ENCODE measurements at regions of chr11 and their contacts with region 1.

Region 1: DNA sequence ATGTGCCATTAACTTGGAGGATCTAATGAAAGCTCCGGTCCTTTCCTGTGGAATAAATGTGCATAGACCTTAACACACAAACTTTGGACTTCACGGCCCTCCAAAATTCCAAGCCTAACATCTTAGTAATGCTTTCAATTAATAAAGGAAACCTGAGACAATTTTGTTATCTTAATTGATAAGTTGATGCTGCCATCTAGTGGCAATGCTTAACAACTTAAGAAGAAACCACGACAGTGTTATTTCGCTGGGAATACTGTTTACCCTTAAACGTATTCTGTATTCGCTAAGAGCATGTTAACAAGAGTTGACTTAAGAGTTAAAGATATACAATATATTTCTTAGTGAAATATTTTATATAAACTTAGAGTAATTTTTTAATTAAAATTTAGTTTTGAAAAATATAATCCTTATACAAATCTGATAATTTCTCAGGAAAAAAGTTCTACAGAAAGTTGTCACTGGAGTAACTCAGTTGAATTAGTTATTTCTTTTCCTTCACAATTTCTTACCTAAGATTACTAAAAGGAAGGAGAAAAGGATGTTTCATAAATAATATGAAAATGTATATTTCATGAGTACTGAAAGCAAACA is 35.0 kb upstream of the OR9G4 start:
- DNase-seq: no peak
- H3K4me3 Mint-ChIP-seq: no peak overlapping the region
- H3K27ac Mint-ChIP-seq: no peak overlapping the region
- H3K4me1 Mint-ChIP-seq: no peaks in the 10 kb centered on the region
- H3K27me3 Mint-ChIP-seq: no peaks in the 10 kb centered on the region

Region 2: GRCh38 chr11:55714982-55715888 is 1068.3 kb before region 1 on chr11:
- CTCF ChIA-PET with region 1: no interaction called
- intact Hi-C with region 1: loop called (anchors 5 kb)
- DNase-seq: peak; percentile 13
- H3K4me3 Mint-ChIP-seq: no peak overlapping the region
- H3K27ac Mint-ChIP-seq: no peak overlapping the region
- H3K4me1 Mint-ChIP-seq: no peaks in the 10 kb centered on the region
- H3K27me3 Mint-ChIP-seq: no peaks in the 10 kb centered on the region

Region 3: GRCh38 chr11:55942785-55943392 is 840.7 kb before region 1 on chr11:
- CTCF ChIA-PET with region 1: no interaction called
- intact Hi-C with region 1: loop called (anchors 1 kb)
- DNase-seq: no peak
- H3K4me3 Mint-ChIP-seq: no peak overlapping the region
- H3K27ac Mint-ChIP-seq: no peak overlapping the region
- H3K4me1 Mint-ChIP-seq: no peaks in the 10 kb centered on the region
- H3K27me3 Mint-ChIP-seq: no peaks in the 10 kb centered on the region

Region 4: DNA sequence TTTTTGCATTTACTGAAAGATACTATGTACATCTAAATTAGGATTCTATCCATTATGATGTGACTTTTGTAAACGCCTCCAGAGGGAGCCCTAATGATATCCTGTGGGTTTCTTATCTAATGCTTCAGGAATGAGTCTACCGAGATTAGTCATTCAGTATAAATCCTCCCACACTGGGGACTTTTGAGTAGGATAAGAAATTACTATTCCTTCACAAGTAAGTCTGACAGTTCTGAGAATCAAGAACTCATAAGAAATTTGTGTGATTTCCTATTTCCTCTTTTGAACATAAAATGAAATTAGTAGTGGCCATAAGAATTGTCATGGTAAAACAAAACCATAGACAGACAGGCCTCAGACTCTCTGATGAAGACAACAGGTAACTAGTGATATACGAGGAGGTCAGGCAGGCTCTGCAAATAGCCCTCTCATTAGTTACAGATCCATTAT is 158.9 kb before region 1 on chr11:
- CTCF ChIA-PET with region 1: interaction called, 8 read pairs
- intact Hi-C with region 1: loop called (anchors 1 kb)
- DNase-seq: peak; percentile 11
- H3K4me3 Mint-ChIP-seq: no peak overlapping the region
- H3K27ac Mint-ChIP-seq: no peak overlapping the region
- H3K4me1 Mint-ChIP-seq: no peaks in the 10 kb centered on the region
- H3K27me3 Mint-ChIP-seq: no peaks in the 10 kb centered on the region

Region 5: DNA sequence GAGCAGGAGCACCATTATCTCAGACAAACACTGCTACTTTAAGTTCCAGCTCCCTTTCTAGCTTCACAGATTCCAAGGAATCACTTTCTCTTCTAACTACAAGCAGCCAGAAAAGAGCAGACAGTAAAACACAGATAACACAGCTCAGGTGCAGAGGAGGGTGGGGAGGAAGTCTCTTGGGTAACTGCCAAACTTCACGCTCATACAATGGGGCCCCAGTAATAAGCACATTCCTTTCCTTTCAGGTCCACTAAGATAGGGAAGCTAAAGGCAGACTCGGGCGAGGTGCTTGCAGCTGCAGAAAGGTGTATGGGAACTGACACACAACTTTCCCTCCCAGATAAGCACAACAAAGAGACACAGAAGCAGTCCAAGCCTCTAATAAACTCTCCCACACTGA is 34.1 kb after region 1 on chr11:
- CTCF ChIA-PET with region 1: no interaction called
- intact Hi-C with region 1: no loop called
- DNase-seq: no peak
- H3K4me3 Mint-ChIP-seq: no peak overlapping the region
- H3K27ac Mint-ChIP-seq: no peak overlapping the region
- H3K4me1 Mint-ChIP-seq: no peaks in the 10 kb centered on the region
- H3K27me3 Mint-ChIP-seq: no peaks in the 10 kb centered on the region

Measured in activated naive CD4-positive, alpha-beta T cell treated with anti-CD3 and anti-CD28 coated beads for 36 hours (primary cell).